Mucosa of descending colon (tissue), 3 donors: ENCODE measurements at regions of chr9 and their contacts with region 1.

Region 1: DNA sequence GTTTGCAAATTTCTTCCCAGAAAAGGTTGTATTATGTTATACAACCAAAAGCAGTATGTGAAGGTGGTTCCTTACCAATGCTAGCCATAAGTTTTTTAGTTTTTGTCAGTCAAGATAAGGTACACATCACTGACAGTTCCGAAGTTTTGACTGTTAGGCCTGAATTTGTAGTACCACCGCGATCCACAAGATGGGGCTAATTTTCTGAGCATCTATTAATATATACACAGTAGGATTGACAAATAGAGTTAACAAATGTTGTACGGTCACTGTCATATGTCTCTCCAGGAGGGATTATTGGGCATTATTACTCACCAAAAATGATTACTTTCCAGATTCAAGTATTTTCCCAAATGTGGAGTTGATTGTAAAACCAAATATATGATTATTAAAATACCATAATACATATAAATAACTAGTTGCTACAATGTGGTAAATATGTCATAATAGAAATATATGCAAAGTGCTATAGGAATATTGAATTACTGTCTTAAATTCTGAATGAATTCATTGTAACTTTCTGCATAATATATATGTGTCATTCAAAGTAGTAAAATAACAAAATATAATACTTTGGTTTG is 28.4 kb upstream of the LRRC19 start:
- DNase-seq: peak in 1 of 3 donors; percentile 84
- ATAC-seq: peak; percentile 78
- H3K4me3 ChIP-seq: no peak overlapping the region
- H3K4me1 ChIP-seq: no peaks in the 10 kb centered on the region
- CTCF ChIP-seq: peak; percentile 65

Region 2: DNA sequence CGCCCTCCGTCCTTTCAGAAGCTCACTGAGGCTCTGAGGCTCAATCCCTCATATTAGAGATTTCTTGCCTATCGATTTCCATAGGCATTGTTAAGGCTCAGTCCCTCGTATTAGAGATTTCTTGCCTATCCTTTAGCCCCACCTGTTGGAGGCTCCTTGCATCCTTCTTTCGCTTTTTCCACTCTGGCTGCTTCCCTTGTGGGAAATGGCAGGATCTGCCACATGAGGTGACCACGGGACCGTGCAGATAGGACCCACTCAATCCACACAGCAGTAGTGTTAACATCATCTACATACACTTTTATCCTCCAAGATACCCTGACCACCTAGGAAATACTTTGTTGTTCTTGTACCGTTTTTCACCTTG is 58.2 kb before region 1 on chr9:
- intact Hi-C with region 1: no loop called
- DNase-seq: peak in 1 of 3 donors; percentile 76
- ATAC-seq: peak; percentile 82
- H3K4me3 ChIP-seq: no peak overlapping the region
- H3K4me1 ChIP-seq: no peaks in the 10 kb centered on the region
- CTCF ChIP-seq: no peak

Region 3: DNA sequence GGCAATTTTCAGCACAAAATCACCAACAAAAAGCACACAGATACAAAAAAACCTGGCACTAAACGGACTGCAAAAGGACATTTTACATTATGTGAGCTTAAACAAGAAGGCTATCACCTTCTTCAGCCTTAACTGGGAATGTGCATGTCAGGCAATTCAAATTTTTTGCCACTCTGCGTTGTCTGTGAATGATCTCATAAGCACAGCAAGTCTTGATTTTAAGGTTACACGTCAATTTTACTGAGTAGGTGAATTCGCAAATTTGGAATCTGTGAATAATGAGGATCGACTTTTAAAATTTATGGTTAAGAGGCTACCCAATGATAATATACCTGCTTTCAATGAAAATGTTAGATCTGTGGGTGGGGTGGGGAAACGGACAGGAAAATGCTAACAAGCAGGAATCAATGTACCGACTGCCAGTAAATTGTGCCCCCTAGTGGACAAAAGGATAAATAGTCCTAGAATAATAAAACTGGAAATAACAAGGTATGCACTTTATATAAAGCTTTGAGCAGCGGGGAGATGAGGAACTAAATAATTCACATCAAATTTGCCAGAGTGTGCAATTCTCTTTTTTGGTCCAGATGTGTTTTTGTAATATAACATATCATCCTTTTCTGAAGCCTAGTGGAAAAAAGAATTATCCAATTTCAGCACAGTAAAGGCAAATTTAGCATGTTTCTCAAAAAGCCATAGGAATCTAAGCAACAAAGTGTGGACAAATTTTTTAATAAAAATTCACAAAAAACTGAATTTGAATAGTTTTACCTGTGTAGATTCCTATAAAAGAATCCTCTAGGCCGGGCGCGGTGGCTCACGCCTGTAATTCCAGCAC is 242.5 kb after region 1 on chr9:
- intact Hi-C with region 1: loop called (anchors 5 kb)
- DNase-seq: peak in 1 of 3 donors; percentile 38
- ATAC-seq: peak; percentile 82
- H3K4me3 ChIP-seq: no peak overlapping the region
- H3K4me1 ChIP-seq: no peaks in the 10 kb centered on the region
- CTCF ChIP-seq: peak; percentile 30